ENCODE measurements at regions of chr7 and their contacts with region 1.

Region 1: GRCh38 chr7:55400191-55400590 is 35.1 kb downstream of the LANCL2 start:
- DNase-seq: no peak
- H3K4me3 ChIP-seq: no peak overlapping the region
- H3K4me3 Mint-ChIP-seq: no peak overlapping the region
- H3K27ac Mint-ChIP-seq: no peak overlapping the region
- H3K4me1 ChIP-seq: no peaks in the 10 kb centered on the region
- H3K4me1 Mint-ChIP-seq: no peaks in the 10 kb centered on the region
- H3K27me3 ChIP-seq: no peaks in the 10 kb centered on the region
- H3K27me3 Mint-ChIP-seq: no peaks in the 10 kb centered on the region
- CTCF ChIP-seq: no peak

Region 2: GRCh38 chr7:55415173-55415778 is 15.1 kb after region 1 on chr7:
- CTCF ChIA-PET with region 1: no interaction called
- POLR2A ChIA-PET with region 1: interaction called, 3 read pairs
- intact Hi-C with region 1: loop called (anchors 1 kb)
- DNase-seq: peak; percentile 80 to 89
- H3K4me3 ChIP-seq: no peak overlapping the region
- H3K4me3 Mint-ChIP-seq: no peak overlapping the region
- H3K27ac Mint-ChIP-seq: no peak overlapping the region
- H3K4me1 ChIP-seq: peaks cover 2% of the 10 kb centered on the region; the same call in 1 of the 2 replicates
- H3K4me1 Mint-ChIP-seq: no peaks in the 10 kb centered on the region
- H3K27me3 ChIP-seq: no peaks in the 10 kb centered on the region
- H3K27me3 Mint-ChIP-seq: no peaks in the 10 kb centered on the region
- CTCF ChIP-seq: peak; percentile 85 to 88

Measured in Caco-2 (cell line).